Activated CD4-positive, alpha-beta memory T cell treated with anti-CD3 and anti-CD28 coated beads for 36 hours (primary cell): ENCODE measurements at regions of chr6 and their contacts with region 1.

Region 1: GRCh38 chr6:107674995-107675738 is 148.9 kb downstream of the SCML4 start:
- DNase-seq: peak; percentile 91
- H3K4me3 Mint-ChIP-seq: peak overlapping the region; percentile 57
- H3K27ac Mint-ChIP-seq: peak overlapping the region; percentile 69
- H3K4me1 Mint-ChIP-seq: peaks cover 12% of the 10 kb centered on the region
- H3K27me3 Mint-ChIP-seq: no peaks in the 10 kb centered on the region

Region 2: DNA sequence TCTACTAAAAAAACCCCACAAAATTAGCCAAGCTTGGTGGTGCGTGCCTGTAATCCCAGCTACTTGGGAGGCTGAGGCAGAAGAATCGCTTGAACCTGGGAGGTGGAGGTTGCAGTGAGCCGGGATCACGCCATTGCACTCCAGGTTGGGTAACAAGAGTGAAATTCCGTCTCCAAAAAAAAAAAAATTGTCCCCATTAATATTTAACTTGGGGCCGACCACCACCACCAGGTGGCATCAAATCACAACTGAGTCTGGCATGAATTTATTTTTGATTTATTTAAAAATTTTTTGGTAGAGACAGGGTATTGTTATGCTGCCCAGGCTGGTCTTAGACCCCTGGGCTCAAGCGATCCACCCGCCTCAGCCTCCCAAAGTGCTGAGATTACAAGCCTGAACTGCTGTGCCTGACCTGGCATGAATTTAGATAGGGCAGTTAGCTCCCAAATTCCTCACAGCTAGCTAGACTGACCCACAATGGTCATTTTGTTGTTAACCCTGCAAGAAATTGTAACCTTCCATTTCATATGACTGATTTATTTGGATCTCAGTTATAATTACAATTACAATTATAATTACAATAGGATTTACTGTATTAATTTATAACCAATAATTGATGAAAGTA is 542.7 kb before region 1 on chr6:
- CTCF ChIA-PET with region 1: no interaction called
- POLR2A ChIA-PET with region 1: no interaction called
- intact Hi-C with region 1: loop called (anchors 10 kb)
- DNase-seq: peak; percentile 19
- H3K4me3 Mint-ChIP-seq: no peak overlapping the region
- H3K27ac Mint-ChIP-seq: no peak overlapping the region
- H3K4me1 Mint-ChIP-seq: no peaks in the 10 kb centered on the region
- H3K27me3 Mint-ChIP-seq: no peaks in the 10 kb centered on the region

Region 3: GRCh38 chr6:107704347-107705013 is 29.3 kb after region 1 on chr6:
- CTCF ChIA-PET with region 1: interaction called, 4 read pairs
- POLR2A ChIA-PET with region 1: no interaction called
- intact Hi-C with region 1: loop called (anchors 2 kb)
- DNase-seq: no peak
- H3K4me3 Mint-ChIP-seq: no peak overlapping the region
- H3K27ac Mint-ChIP-seq: no peak overlapping the region
- H3K4me1 Mint-ChIP-seq: peaks cover 10% of the 10 kb centered on the region
- H3K27me3 Mint-ChIP-seq: no peaks in the 10 kb centered on the region

Region 4: DNA sequence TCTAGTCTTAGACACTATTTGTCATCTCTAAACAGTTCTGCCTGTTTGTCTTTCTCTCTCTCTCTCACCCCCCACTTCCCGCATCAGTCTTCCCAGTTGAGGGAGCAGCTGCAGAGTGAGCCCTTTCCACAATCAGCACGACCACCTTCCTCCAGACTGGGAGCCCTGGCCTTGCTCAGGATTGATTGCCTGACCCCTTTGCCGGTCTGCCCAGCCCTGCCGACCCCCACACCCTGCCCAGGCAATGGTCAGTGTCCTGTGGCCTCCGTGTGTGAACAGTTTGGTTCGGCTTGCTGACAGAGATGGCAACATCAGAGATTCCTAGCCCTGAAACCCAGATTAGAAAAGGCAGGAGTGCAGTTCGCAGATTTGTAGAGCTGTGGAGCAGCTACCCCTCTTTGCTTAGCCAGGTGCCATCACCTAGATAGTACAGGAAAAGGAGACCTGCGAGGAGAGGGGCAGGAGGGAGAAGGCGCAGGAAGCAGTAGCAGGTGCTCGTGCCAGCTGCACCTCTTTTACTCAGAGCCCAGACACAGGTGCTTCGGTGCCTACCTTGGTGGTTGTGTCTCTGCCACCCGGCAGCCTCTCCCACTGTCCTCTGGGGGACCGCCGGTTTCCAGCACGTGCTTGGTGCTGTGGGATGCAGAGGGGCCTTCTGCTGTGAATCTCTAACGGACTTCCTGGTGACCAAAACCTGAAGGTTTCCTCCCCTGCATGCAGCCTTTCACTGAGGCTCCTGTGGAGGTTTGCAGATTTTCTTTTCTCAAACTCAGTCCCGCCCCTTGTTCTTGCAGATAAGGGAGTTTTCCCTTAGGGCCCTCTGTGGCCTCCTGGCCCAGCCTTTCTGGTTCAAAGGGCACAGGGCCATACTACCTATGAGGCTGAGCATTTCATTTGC is 56.5 kb after region 1 on chr6:
- CTCF ChIA-PET with region 1: no interaction called
- POLR2A ChIA-PET with region 1: no interaction called
- intact Hi-C with region 1: loop called (anchors 2 kb)
- DNase-seq: peak; percentile 47
- H3K4me3 Mint-ChIP-seq: peak overlapping the region; percentile 75
- H3K27ac Mint-ChIP-seq: peak overlapping the region; percentile 74
- H3K4me1 Mint-ChIP-seq: peaks cover 83% of the 10 kb centered on the region
- H3K27me3 Mint-ChIP-seq: no peaks in the 10 kb centered on the region

Region 5: GRCh38 chr6:107957909-107958688 is 282.9 kb after region 1 on chr6 and contains the start of gene SEC63:
- CTCF ChIA-PET with region 1: no interaction called
- POLR2A ChIA-PET with region 1: no interaction called
- intact Hi-C with region 1: loop called (anchors 5 kb)
- DNase-seq: peak; percentile 99
- H3K4me3 Mint-ChIP-seq: peak within 1 kb of the TSS; percentile 100
- H3K27ac Mint-ChIP-seq: peak within 1 kb of the TSS; percentile 95
- H3K4me1 Mint-ChIP-seq: peaks cover 26% of the 10 kb centered on the region
- H3K27me3 Mint-ChIP-seq: no peaks in the 10 kb centered on the region
- total RNA-seq, gene SEC63: 90.6 to 95.9 TPM